ENCODE measurements at regions of chr3 and their contacts with region 1.

Region 1: DNA sequence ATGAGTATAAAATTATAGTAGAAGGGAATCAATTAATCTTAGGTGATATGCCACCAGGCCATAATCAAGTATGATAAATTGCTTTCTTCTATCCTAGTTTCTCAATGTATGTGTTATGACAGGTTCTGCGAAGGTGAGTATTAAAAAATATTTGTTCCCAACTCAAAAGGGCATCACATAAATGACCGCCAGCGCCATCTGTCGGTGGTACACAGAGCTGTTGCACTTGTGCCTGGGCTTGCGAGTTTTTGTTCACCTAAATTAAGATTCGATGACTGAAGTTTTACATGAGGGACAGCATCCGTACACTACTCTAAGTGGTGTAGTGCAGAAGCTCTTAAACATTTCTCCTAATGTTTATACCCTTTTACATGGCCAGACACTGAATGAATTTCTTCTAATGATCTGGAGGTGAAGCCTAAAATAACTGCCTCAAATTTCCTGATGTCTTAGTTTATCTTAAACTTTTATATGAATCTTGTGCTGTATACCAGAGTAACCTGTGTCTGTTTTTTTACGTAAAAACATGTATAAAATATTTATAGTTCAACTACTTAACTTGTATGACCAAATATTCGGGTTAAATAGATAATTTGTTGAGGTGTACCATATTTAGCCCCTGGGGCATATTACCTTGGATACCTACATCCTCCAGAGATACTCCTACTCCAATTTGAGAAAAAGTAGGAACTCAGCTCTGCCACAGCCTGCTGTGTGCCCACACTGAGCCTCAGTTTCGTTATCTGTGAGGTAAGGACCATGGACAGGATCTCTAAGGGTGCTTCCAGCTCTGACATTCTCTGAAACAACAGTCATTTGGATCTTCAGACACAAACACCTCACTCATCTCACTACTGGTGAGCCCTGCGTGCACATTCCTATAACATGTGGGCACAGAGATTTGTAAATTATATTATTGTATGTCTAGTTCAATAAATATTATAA is 365.6 kb downstream of the MAGI1 start:
- DNase-seq: peak; percentile 38 to 57
- H3K4me3 ChIP-seq: no peak overlapping the region
- H3K4me3 Mint-ChIP-seq: no peak overlapping the region
- H3K27ac Mint-ChIP-seq: no peak overlapping the region
- H3K4me1 ChIP-seq: no peaks in the 10 kb centered on the region; the same call in 1 of the 2 replicates
- H3K4me1 Mint-ChIP-seq: no peaks in the 10 kb centered on the region
- H3K27me3 ChIP-seq: no peaks in the 10 kb centered on the region
- H3K27me3 Mint-ChIP-seq: no peaks in the 10 kb centered on the region
- CTCF ChIP-seq: peak; percentile 65 to 66

Region 2: DNA sequence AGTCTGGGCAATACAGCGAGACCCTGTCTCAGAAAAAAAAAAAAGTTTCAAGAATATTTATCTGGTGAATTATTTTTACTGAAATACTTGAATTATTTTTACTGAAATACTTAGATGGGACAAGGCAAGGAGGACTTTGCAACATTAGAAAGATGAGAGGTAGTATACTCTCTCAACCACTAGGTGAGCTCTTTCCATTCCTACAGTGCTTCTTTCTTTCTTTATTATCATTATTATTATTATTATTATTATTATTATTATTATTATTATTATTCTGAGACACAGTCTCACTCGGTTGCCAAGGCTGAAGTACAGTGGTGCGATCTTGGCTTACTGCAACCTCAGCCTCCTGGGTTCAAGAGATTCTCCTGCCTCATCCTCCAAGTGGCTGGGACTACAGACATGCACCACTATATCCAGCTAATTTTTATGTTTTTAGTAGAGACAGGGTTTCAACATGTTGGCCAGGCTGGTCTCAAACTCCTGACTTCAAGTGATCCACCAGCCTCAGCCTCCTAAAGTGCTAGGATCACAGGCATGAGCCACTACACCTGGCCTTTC is 103.2 kb before region 1 on chr3:
- CTCF ChIA-PET with region 1: no interaction called
- POLR2A ChIA-PET with region 1: no interaction called
- intact Hi-C with region 1: loop called (anchors 1 kb)
- DNase-seq: no peak
- H3K4me3 ChIP-seq: no peak overlapping the region
- H3K4me3 Mint-ChIP-seq: no peak overlapping the region
- H3K27ac Mint-ChIP-seq: no peak overlapping the region
- H3K4me1 ChIP-seq: peaks cover 1% of the 10 kb centered on the region; the same call in 1 of the 2 replicates
- H3K4me1 Mint-ChIP-seq: peaks cover 6% of the 10 kb centered on the region
- H3K27me3 ChIP-seq: no peaks in the 10 kb centered on the region
- H3K27me3 Mint-ChIP-seq: no peaks in the 10 kb centered on the region
- CTCF ChIP-seq: peak in 1 of 2 experiments; percentile 22

Region 3: GRCh38 chr3:65713016-65713415 is 39.9 kb after region 1 on chr3:
- CTCF ChIA-PET with region 1: no interaction called
- POLR2A ChIA-PET with region 1: no interaction called
- intact Hi-C with region 1: no loop called
- DNase-seq: no peak
- H3K4me3 ChIP-seq: no peak overlapping the region
- H3K4me3 Mint-ChIP-seq: no peak overlapping the region
- H3K27ac Mint-ChIP-seq: no peak overlapping the region
- H3K4me1 ChIP-seq: no peaks in the 10 kb centered on the region
- H3K4me1 Mint-ChIP-seq: no peaks in the 10 kb centered on the region
- H3K27me3 ChIP-seq: no peaks in the 10 kb centered on the region
- H3K27me3 Mint-ChIP-seq: no peaks in the 10 kb centered on the region
- CTCF ChIP-seq: no peak